Dendritic cell treated with granulocyte-macrophage colony-stimulating factor and Interleukin-4, amounts not matched to agents 40 ng/mL and 50 ng/mL, for 4 days (primary cell): ENCODE measurements at regions of chr10 and their contacts with region 1.

Region 1: DNA sequence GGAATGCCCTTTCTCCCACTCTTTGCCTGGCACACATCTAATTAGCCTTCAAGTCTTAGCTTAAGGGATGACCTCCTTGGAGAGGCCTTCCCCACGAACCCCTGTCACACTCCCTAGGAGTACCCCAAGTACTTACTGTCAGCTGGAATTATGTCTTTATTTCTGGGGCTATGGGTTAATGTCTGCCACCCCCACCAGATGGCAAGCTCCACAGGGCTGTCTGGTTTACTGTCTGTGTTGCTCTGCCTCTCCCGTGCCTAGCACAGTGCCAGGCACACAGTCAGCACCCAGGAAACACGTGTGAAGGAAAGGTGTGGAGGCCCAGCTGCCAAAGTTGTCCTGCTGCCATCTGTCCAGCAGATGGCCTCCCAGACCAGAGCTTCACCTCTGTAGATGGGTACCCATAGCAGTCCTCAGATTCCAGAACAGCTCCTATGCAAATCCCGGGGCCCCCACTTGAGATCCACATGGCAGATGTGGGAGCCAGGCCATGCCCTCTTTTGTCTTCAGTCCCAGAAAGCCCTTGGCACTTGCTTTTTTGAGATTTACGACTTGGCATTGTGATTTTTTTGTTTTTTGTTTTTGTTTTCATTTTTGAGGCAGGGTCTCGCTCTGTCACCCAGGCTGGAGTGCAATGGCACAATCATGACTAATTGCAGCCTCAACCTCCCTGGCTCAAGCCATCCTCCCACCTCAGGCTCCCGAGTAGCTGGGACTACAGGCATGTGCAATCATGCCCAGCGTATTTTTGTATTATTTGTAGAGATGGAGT is 17.2 kb upstream of the PALD1 start:
- H3K4me3 Mint-ChIP-seq: no peak overlapping the region
- H3K27ac Mint-ChIP-seq: no peak overlapping the region
- H3K4me1 Mint-ChIP-seq: peaks cover 16% of the 10 kb centered on the region
- H3K27me3 Mint-ChIP-seq: peaks cover 64% of the 10 kb centered on the region

Region 2: DNA sequence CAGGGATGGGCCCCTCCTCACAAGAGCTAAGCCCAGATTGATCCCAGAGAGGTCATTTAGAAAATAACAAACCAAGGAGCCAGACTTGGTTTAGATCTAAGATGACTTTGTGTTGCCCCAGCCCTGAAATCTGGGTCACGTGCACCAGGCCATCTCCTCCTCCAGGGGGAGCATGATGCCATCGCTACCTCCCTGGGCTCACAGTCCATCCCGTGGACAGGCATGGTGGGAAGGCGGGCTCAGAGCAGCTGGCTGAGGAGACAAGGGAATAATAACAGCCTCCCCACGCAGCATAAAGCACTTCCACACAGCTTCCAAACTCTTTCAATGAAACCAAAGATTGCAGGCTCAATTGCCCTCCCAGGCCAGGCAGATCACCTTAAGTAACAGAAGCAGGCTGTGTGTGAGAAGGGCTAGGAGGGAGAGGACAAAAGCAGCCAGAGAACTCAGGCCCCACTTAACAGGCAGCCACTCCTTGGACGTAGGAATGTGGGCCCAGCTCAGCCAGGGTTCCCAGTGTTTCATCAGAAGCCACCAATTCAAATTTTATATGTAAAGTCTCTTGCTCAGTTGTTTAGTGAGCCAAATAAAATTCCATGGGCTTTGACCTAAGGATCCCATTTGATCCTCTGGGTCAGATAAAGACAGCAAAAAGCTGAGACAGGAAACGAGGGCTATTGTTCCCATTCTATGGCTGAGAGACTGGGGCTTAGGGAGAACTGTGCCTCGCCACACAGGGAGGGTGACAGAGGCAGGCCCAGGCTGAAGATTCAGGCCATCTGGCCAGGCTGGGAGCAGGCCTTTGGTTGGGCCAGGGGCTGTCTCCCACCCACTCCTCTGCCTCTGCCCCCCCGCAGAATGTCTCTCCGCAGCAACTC is 559.5 kb before region 1 on chr10:
- intact Hi-C with region 1: no loop called
- H3K4me3 Mint-ChIP-seq: no peak overlapping the region
- H3K27ac Mint-ChIP-seq: no peak overlapping the region
- H3K4me1 Mint-ChIP-seq: no peaks in the 10 kb centered on the region
- H3K27me3 Mint-ChIP-seq: peaks cover 10% of the 10 kb centered on the region

Region 3: GRCh38 chr10:70540089-70540788 is 78.8 kb after region 1 on chr10:
- intact Hi-C with region 1: loop called (anchors 1 kb)
- H3K4me3 Mint-ChIP-seq: no peak overlapping the region
- H3K27ac Mint-ChIP-seq: no peak overlapping the region
- H3K4me1 Mint-ChIP-seq: peaks cover 13% of the 10 kb centered on the region
- H3K27me3 Mint-ChIP-seq: no peaks in the 10 kb centered on the region